GM12878 (cell line): ENCODE measurements at regions of chr16 and their contacts with region 1.

Region 1: DNA sequence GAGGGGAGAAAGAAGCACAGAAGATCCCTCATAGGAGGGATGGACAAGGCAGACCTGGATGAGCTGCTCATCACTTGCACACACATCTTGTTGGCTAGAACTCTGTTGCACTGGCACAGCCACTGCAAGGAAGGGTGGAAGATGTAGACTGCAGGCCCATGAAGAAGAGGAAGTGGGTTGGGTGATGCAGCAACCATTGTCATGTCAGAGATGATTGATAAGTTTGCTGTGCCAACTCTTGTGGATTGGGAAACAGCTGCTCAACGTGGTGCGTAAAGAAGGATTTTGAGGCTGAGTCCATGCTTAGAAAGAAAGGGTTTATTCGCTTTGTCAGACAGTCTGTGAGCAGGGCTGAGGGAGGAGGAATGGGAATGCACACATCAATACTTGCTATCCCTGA is 161.4 kb upstream of the MPHOSPH6 start:
- DNase-seq: no peak
- ATAC-seq: no peak
- H3K4me3 ChIP-seq: no peak overlapping the region
- H3K27ac ChIP-seq: no peak overlapping the region
- H3K4me1 ChIP-seq: no peaks in the 10 kb centered on the region
- H3K27me3 ChIP-seq: peaks cover 0 to 2% of the 10 kb centered on the region in 2 experiments; a peak in 1 of 4 replicates
- CTCF ChIP-seq: no peak
- EP300 ChIP-seq: no peak
- POLR2A ChIP-seq: no peak
- RAD21 ChIP-seq: no peak

Region 2: GRCh38 chr16:81778861-81779535 is 552.4 kb before region 1 on chr16 and contains the start of gene PLCG2:
- CTCF ChIA-PET with region 1: no interaction called
- POLR2A ChIA-PET with region 1: no interaction called
- RAD21 ChIA-PET with region 1: no interaction called
- SMC1A ChIA-PET with region 1: no interaction called
- in situ Hi-C with region 1: no loop called
- intact Hi-C with region 1: no loop called
- DNase-seq: no peak
- ATAC-seq: peak; percentile 83
- H3K4me3 ChIP-seq: peak within 1 kb of the TSS; percentile 99
- H3K27ac ChIP-seq: peak within 1 kb of the TSS; percentile 86
- H3K4me1 ChIP-seq: peaks cover 28% of the 10 kb centered on the region
- H3K27me3 ChIP-seq: no peaks in the 10 kb centered on the region
- CTCF ChIP-seq: no peak
- EP300 ChIP-seq: no peak
- POLR2A ChIP-seq: peak; percentile 83
- RAD21 ChIP-seq: no peak
- polyA plus RNA-seq, gene PLCG2: 47.6 to 53.9 TPM

Region 3: GRCh38 chr16:82229796-82230619 is 101.4 kb before region 1 on chr16:
- CTCF ChIA-PET with region 1: no interaction called
- POLR2A ChIA-PET with region 1: no interaction called
- RAD21 ChIA-PET with region 1: no interaction called
- SMC1A ChIA-PET with region 1: no interaction called
- in situ Hi-C with region 1: no loop called
- intact Hi-C with region 1: no loop called
- DNase-seq: peak; percentile 3
- ATAC-seq: peak; percentile 75
- H3K4me3 ChIP-seq: no peak overlapping the region
- H3K27ac ChIP-seq: no peak overlapping the region
- H3K4me1 ChIP-seq: no peaks in the 10 kb centered on the region
- H3K27me3 ChIP-seq: peaks cover 0 to 3% of the 10 kb centered on the region in 2 experiments; a peak in 2 of 4 replicates
- CTCF ChIP-seq: peak; percentile 84 to 93 (median 85)
- EP300 ChIP-seq: no peak
- POLR2A ChIP-seq: no peak
- RAD21 ChIP-seq: peak; percentile 72

Region 4: GRCh38 chr16:82301146-82301755 is 30.1 kb before region 1 on chr16:
- CTCF ChIA-PET with region 1: no interaction called
- POLR2A ChIA-PET with region 1: no interaction called
- RAD21 ChIA-PET with region 1: no interaction called
- SMC1A ChIA-PET with region 1: no interaction called
- in situ Hi-C with region 1: no loop called
- intact Hi-C with region 1: no loop called
- DNase-seq: no peak
- ATAC-seq: no peak
- H3K4me3 ChIP-seq: no peak overlapping the region
- H3K27ac ChIP-seq: no peak overlapping the region
- H3K4me1 ChIP-seq: no peaks in the 10 kb centered on the region
- H3K27me3 ChIP-seq: no peaks in the 10 kb centered on the region
- CTCF ChIP-seq: no peak
- EP300 ChIP-seq: no peak
- POLR2A ChIP-seq: no peak
- RAD21 ChIP-seq: no peak

Region 5: GRCh38 chr16:82317411-82318167 is 13.8 kb before region 1 on chr16:
- CTCF ChIA-PET with region 1: no interaction called
- POLR2A ChIA-PET with region 1: no interaction called
- RAD21 ChIA-PET with region 1: no interaction called
- SMC1A ChIA-PET with region 1: interaction called, 3 read pairs
- in situ Hi-C with region 1: no loop called
- intact Hi-C with region 1: loop called (anchors 1 kb)
- DNase-seq: no peak
- ATAC-seq: no peak
- H3K4me3 ChIP-seq: no peak overlapping the region
- H3K27ac ChIP-seq: no peak overlapping the region
- H3K4me1 ChIP-seq: no peaks in the 10 kb centered on the region
- H3K27me3 ChIP-seq: no peaks in the 10 kb centered on the region
- CTCF ChIP-seq: no peak
- EP300 ChIP-seq: no peak
- POLR2A ChIP-seq: no peak
- RAD21 ChIP-seq: no peak